Lower leg skin (tissue), 4 donors: ENCODE measurements at regions of chr3 and their contacts with region 1.

Region 1: GRCh38 chr3:145326666-145327065 is 834.3 kb downstream of the PLOD2 start:
- DNase-seq: no peak
- H3K4me3 ChIP-seq: no peak overlapping the region
- CTCF ChIP-seq: no peak
- POLR2A ChIP-seq: no peak

Region 2: GRCh38 chr3:143363276-143363675 is 1963.4 kb before region 1 on chr3:
- intact Hi-C with region 1: loop called (anchors 5 kb)
- DNase-seq: no peak
- H3K4me3 ChIP-seq: no peak overlapping the region
- CTCF ChIP-seq: no peak
- POLR2A ChIP-seq: no peak

Region 3: GRCh38 chr3:145246291-145246690 is 80.4 kb before region 1 on chr3:
- intact Hi-C with region 1: loop called (anchors 5 kb)
- DNase-seq: no peak
- H3K4me3 ChIP-seq: no peak overlapping the region
- CTCF ChIP-seq: no peak
- POLR2A ChIP-seq: no peak